BJ (cell line): ENCODE measurements at regions of chr2 and their contacts with region 1.

Region 1: DNA sequence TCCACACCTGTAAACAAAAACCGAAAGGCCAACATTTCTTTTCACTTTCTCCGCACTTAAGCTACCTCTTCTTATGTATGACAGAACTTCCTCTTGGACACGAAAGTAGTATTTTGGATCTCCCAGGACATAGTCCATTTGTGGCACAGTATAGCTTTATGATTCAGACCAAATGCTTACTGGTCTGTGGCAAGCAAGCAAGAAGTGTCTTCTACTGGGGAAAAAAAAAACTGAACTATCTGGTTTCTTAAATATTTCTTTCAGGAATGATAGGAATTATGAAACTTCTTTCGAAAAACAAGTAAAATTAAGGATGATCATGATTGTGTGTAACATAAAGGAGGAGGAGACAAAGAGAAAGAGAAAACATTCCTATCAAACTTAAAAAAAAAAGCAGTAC is 33.6 kb downstream of the SRBD1 start:
- DNase-seq: no peak
- H3K4me3 ChIP-seq: no peak overlapping the region
- H3K27me3 ChIP-seq: no peaks in the 10 kb centered on the region
- CTCF ChIP-seq: no peak

Region 2: GRCh38 chr2:45009303-45009927 is 568.0 kb before region 1 on chr2 and contains the start of gene SIX2:
- CTCF ChIA-PET with region 1: no interaction called
- POLR2A ChIA-PET with region 1: interaction called, 18 read pairs
- DNase-seq: peak; percentile 92
- H3K4me3 ChIP-seq: peak within 1 kb of the TSS; percentile 42
- H3K27me3 ChIP-seq: peaks cover 53% of the 10 kb centered on the region
- CTCF ChIP-seq: no peak
- polyA plus RNA-seq, gene SIX2: 0.23 and 0.36 TPM in 2 replicates